ENCODE measurements at regions of chr10 and their contacts with region 1.

Region 1: GRCh38 chr10:93180482-93180931 is 106.8 kb downstream of the CYP26A1 start:
- DNase-seq: peak; percentile 52 to 77
- H3K4me3 ChIP-seq: peak overlapping the region; percentile 2 to 16
- H3K27ac ChIP-seq: peak overlapping the region in 1 of 2 donors; percentile 36
- H3K4me1 ChIP-seq: peaks cover 0 to 16% (median 4%) of the 10 kb centered on the region in 4 donors
- H3K27me3 ChIP-seq: no peaks in the 10 kb centered on the region
- CTCF ChIP-seq: no peak

Region 2: DNA sequence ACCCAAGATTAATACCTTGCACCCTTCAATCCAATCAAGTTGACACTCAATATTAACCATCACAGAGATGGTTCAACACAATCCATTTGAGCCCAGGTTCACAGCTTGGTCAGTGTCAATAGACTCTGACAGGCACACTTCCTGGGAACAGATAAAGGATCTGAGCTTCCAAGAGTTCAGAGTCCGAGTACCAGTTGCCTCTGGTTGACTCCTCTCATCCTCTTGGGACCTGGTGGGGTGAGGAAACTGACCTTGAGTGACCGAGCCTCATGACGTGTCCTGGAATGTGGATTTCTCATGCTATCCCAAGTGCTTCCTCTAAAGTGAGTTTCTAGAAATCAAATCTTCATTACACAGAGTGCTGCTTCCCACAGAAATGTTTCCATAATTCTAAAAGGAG is 55.2 kb after region 1 on chr10:
- intact Hi-C with region 1: loop called (anchors 5 kb)
- DNase-seq: no peak
- H3K4me3 ChIP-seq: no peak overlapping the region
- H3K27ac ChIP-seq: no peak overlapping the region
- H3K4me1 ChIP-seq: peaks cover 0 to 37% (median 12%) of the 10 kb centered on the region in 4 donors
- H3K27me3 ChIP-seq: no peaks in the 10 kb centered on the region
- CTCF ChIP-seq: no peak

Region 3: GRCh38 chr10:93245779-93246178 is 65.3 kb after region 1 on chr10:
- intact Hi-C with region 1: no loop called
- DNase-seq: no peak
- H3K4me3 ChIP-seq: no peak overlapping the region
- H3K27ac ChIP-seq: no peak overlapping the region
- H3K4me1 ChIP-seq: no peaks in the 10 kb centered on the region
- H3K27me3 ChIP-seq: peaks cover 0 to 4% of the 10 kb centered on the region in 2 donors
- CTCF ChIP-seq: no peak

Measured in tibial artery (tissue), 4 donors.